Mammary epithelial cell (primary cell): ENCODE measurements at regions of chr5 and their contacts with region 1.

Region 1: DNA sequence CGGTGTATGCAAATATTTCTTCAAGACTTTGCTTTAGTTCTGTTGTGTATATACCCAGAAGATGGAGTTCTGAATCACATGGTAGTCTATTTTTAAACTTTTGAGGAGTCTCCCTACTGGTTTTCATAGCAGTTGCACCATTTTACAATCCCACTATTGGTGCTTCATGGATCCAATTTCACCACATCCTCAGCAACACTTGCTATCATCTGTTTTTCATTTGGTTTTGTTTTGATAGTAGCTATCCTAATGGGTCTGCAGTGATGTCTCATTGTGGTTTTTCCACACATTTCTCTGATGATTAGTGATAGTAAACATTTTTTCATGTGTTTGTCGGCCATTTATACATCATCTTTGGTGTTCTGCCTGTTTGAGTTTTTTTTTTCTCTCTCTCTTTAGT is 1339.3 kb downstream of the EFNA5 start:
- DNase-seq: peak; percentile 19
- H3K4me3 ChIP-seq: no peak overlapping the region
- H3K27ac ChIP-seq: no peak overlapping the region
- H3K4me1 ChIP-seq: no peaks in the 10 kb centered on the region
- H3K27me3 ChIP-seq: no peaks in the 10 kb centered on the region
- CTCF ChIP-seq: no peak

Region 2: DNA sequence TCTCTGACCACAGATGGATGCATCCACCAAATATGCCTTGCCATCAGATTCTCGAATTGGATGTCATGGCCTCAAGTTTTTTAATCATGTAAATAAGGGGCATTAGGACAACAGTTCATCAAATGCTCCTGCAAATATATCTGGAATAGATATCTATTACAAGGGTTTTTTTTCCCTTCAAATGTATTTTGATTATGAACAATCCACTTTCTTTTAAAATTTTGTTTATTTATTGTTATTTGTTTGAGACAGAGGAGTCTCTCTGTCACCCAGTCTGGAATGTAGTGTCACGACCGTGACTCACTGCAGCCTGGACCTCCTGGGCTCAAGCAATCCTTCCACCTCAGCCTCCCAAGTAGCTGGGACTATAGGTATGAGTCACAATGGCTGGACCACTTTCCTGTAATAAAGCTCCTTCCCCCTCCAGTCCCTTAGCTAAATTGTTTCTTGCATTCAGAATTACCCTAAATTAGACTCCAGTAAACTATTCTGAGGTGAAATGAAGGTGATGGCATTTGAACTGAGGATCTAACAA is 72.8 kb before region 1 on chr5:
- CTCF ChIA-PET with region 1: no interaction called
- dilution Hi-C with region 1: no loop called
- in situ Hi-C with region 1: no loop called
- intact Hi-C with region 1: no loop called
- DNase-seq: no peak
- H3K4me3 ChIP-seq: no peak overlapping the region
- H3K27ac ChIP-seq: no peak overlapping the region
- H3K4me1 ChIP-seq: no peaks in the 10 kb centered on the region
- H3K27me3 ChIP-seq: no peaks in the 10 kb centered on the region
- CTCF ChIP-seq: no peak

Region 3: GRCh38 chr5:106454651-106455415 is 123.4 kb after region 1 on chr5:
- CTCF ChIA-PET with region 1: no interaction called
- dilution Hi-C with region 1: no loop called
- in situ Hi-C with region 1: no loop called
- intact Hi-C with region 1: loop called (anchors 5 kb)
- DNase-seq: peak; percentile 91
- H3K4me3 ChIP-seq: no peak overlapping the region
- H3K27ac ChIP-seq: peak overlapping the region; percentile 83
- H3K4me1 ChIP-seq: peaks cover 17% of the 10 kb centered on the region
- H3K27me3 ChIP-seq: no peaks in the 10 kb centered on the region
- CTCF ChIP-seq: peak; percentile 57 to 65